B cell (primary cell): ENCODE measurements at regions of chr2 and their contacts with region 1.

Region 1: GRCh38 chr2:25252281-25253105 is 84.1 kb upstream of the POMC start:
- DNase-seq: peak; percentile 66
- ATAC-seq: peak; percentile 76
- H3K4me3 ChIP-seq: peak overlapping the region in 4 of 5 experiments; percentile 69 to 91 (median 76)
- H3K4me3 Mint-ChIP-seq: peak overlapping the region; percentile 88
- H3K27ac ChIP-seq: peak overlapping the region; percentile 12 to 74
- H3K27ac Mint-ChIP-seq: peak overlapping the region; percentile 46
- H3K4me1 ChIP-seq: peaks cover 9 to 26% of the 10 kb centered on the region in 2 donors
- H3K4me1 Mint-ChIP-seq: peaks cover 21% of the 10 kb centered on the region
- H3K27me3 ChIP-seq: no peaks in the 10 kb centered on the region
- H3K27me3 Mint-ChIP-seq: no peaks in the 10 kb centered on the region
- CTCF ChIP-seq: no peak

Region 2: DNA sequence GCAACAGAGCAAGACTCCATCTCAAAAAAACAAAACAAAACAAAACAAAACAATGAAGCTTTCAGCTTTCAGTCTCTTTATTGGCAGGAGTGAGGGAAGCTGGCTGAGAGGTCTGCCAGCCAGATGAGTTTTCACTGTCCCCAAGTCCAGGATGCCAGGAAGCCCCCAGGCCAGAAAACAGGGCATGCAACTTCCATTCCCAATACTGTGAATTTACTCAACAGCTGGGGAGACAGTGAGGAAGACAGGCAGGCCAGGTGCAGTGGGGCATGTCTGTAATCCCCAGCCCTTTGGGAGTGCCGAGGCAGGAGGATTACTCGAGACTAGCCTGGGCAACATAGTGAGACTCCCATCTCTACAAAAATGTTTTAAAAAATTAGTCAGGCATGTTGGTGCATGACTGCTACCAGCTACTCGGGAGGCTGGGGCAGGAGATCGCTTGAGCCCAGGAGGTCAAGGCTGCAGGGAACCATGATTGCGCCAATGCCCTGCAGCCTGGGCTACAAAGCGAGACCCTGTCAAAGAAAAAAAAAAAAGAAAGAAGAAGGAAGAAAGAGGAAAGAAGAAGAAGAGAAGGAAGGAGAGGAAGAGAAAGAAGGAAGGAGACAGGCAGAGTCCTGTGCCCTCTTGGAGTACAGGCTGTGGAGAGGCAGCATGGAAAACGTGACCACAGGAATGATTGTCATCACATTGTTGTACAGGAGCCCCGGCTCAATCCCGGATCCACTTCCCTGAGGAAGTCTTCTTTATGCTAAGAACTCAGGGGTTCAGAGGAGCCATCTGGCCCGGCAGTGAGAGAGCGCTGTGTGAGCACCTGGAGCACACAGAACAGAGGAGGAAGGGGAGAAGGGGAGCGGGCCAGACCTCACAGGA is 54.9 kb before region 1 on chr2:
- CTCF ChIA-PET with region 1: interaction called, 13 read pairs
- POLR2A ChIA-PET with region 1: interaction called, 5 read pairs
- intact Hi-C with region 1: no loop called
- DNase-seq: no peak
- ATAC-seq: no peak
- H3K4me3 ChIP-seq: no peak overlapping the region
- H3K4me3 Mint-ChIP-seq: no peak overlapping the region
- H3K27ac ChIP-seq: no peak overlapping the region
- H3K27ac Mint-ChIP-seq: no peak overlapping the region
- H3K4me1 ChIP-seq: peaks cover 6 to 14% of the 10 kb centered on the region in 2 donors
- H3K4me1 Mint-ChIP-seq: peaks cover 14% of the 10 kb centered on the region
- H3K27me3 ChIP-seq: peaks cover 0 to 6% (median 1%) of the 10 kb centered on the region in 4 experiments
- H3K27me3 Mint-ChIP-seq: no peaks in the 10 kb centered on the region
- CTCF ChIP-seq: no peak

Region 3: GRCh38 chr2:25294573-25295462 is 42.3 kb after region 1 on chr2:
- CTCF ChIA-PET with region 1: interaction called, 4 read pairs
- POLR2A ChIA-PET with region 1: no interaction called
- intact Hi-C with region 1: loop called (anchors 2 kb)
- DNase-seq: peak; percentile 81
- ATAC-seq: peak; percentile 81
- H3K4me3 ChIP-seq: peak overlapping the region in 4 of 5 experiments; percentile 6 to 45 (median 26)
- H3K4me3 Mint-ChIP-seq: peak overlapping the region; percentile 80
- H3K27ac ChIP-seq: peak overlapping the region; percentile 87 to 91
- H3K27ac Mint-ChIP-seq: peak overlapping the region; percentile 94
- H3K4me1 ChIP-seq: peaks cover 41 to 61% of the 10 kb centered on the region in 2 donors
- H3K4me1 Mint-ChIP-seq: peaks cover 43% of the 10 kb centered on the region
- H3K27me3 ChIP-seq: no peaks in the 10 kb centered on the region
- H3K27me3 Mint-ChIP-seq: no peaks in the 10 kb centered on the region
- CTCF ChIP-seq: no peak

Region 4: GRCh38 chr2:25371253-25372241 is 119.1 kb after region 1 on chr2:
- CTCF ChIA-PET with region 1: no interaction called
- POLR2A ChIA-PET with region 1: no interaction called
- intact Hi-C with region 1: no loop called
- DNase-seq: peak; percentile 4
- ATAC-seq: no peak
- H3K4me3 ChIP-seq: no peak overlapping the region
- H3K4me3 Mint-ChIP-seq: no peak overlapping the region
- H3K27ac ChIP-seq: no peak overlapping the region
- H3K27ac Mint-ChIP-seq: no peak overlapping the region
- H3K4me1 ChIP-seq: peaks cover 7 to 11% of the 10 kb centered on the region in 2 donors
- H3K4me1 Mint-ChIP-seq: peaks cover 9% of the 10 kb centered on the region
- H3K27me3 ChIP-seq: no peaks in the 10 kb centered on the region
- H3K27me3 Mint-ChIP-seq: no peaks in the 10 kb centered on the region
- CTCF ChIP-seq: no peak